Endothelial cell of umbilical vein (primary cell): ENCODE measurements at regions of chr17 and their contacts with region 1.

Region 1: GRCh38 chr17:48241131-48241591 is 133.6 kb downstream of the SNX11 start:
- DNase-seq: peak; percentile 73
- H3K4me3 ChIP-seq: no peak overlapping the region
- H3K27ac ChIP-seq: peak overlapping the region; percentile 90
- H3K4me1 ChIP-seq: peaks cover 92% of the 10 kb centered on the region
- H3K27me3 ChIP-seq: no peaks in the 10 kb centered on the region
- CTCF ChIP-seq: no peak
- POLR2A ChIP-seq: peak; percentile 14

Region 2: DNA sequence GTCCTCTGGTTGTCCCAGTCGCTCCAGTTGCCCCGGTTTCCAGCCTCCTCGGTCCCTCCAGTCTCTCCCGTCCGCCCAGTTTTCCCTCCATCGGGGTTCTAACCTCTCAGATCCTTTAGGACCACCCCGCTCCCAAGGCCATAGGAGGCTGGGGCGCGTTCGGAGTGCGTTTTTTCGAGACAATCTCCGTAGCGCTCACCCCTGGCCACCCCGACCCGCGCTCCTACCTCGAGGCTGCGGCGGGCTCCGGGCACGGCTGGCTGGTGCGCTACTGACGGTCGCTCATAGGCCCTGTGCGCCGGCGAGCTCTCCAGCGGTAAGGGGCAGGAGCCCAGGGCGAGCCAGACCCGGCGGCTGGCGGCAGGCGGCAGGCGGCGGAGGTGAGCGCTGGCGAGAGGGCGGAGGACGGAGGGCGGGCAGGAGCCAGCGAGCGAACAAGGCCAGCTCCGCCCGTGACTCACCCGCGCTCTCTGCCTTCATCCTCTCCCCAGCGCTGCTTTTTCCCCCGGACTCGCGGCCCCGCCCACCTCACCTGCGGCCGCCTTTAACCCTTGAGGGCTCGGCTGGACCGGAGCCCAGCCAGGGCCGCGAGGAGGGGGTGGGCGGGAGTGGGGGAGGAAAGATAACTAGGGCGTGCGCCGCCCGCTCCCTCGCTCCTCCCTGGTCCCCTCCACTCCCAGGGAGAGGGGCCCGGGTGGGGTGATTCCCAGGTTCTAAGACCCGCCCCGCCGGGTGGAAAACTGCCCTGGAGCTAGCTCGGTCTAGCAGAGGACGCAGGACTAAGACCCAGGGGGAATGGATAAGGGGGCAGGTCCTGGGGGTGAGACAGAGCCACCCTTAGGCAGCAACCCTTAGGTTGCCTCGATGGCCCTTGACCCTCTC is 390.2 kb before region 1 on chr17 and contains the start of gene SP6:
- CTCF ChIA-PET with region 1: no interaction called
- POLR2A ChIA-PET with region 1: no interaction called
- dilution Hi-C with region 1: no loop called
- intact Hi-C with region 1: no loop called
- DNase-seq: peak; percentile 58
- H3K4me3 ChIP-seq: peak within 1 kb of the TSS in 1 of 3 experiments; percentile 6
- H3K27ac ChIP-seq: no peak within 1 kb of the TSS
- H3K4me1 ChIP-seq: peaks cover 16% of the 10 kb centered on the region
- H3K27me3 ChIP-seq: peaks cover 3 to 11% of the 10 kb centered on the region in 2 experiments
- CTCF ChIP-seq: peak in 1 of 2 donors; percentile 31
- POLR2A ChIP-seq: no peak
- total RNA-seq, gene SP6: 0.90 and 1.3 TPM in 2 replicates

Region 3: DNA sequence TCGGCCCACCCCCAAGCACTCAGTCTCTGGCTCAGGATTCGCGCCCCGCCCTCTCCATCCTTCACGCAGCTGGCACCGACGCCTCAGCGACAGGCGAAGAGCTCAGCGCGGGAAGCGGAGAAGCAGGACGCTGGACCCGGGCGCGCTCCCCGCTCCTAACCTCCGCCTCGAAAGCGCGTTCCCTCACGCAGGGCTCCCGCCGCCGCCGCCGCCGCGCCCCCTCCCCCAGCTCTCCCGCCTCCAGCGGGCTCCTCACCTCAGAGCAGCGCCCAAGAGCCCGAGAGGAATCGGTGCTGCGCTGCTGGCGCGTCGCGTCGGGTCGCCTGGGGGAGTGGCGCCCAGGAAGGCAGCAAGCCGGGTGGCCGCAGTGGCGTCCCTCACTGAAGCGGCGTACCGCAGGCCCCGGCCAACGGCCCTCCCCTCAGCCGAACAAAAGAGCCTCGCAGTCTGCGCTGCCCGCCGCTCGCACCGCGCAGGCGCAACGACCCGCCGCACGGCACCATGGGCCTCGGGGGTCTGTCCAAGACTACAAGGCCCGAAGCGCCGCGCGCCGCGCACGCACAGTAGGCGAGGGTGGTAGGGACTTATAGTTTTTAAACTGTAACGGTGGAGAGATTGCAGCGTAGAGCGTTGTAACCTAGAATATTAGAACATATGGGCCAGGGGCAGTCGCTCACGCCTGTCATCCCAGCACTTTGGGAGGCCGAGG is 140.0 kb before region 1 on chr17 and contains the start of gene CBX1:
- CTCF ChIA-PET with region 1: no interaction called
- POLR2A ChIA-PET with region 1: no interaction called
- dilution Hi-C with region 1: no loop called
- intact Hi-C with region 1: loop called (anchors 5 kb)
- DNase-seq: peak; percentile 96
- H3K4me3 ChIP-seq: peak within 1 kb of the TSS; percentile 60 to 91 (median 82)
- H3K27ac ChIP-seq: peak within 1 kb of the TSS; percentile 58
- H3K4me1 ChIP-seq: peaks cover 8% of the 10 kb centered on the region
- H3K27me3 ChIP-seq: no peaks in the 10 kb centered on the region
- CTCF ChIP-seq: no peak
- POLR2A ChIP-seq: peak; percentile 50
- total RNA-seq, gene CBX1: 95.2 and 102 TPM in 2 replicates

Region 4: GRCh38 chr17:48228721-48229120 is 12.4 kb before region 1 on chr17:
- CTCF ChIA-PET with region 1: interaction called, 11 read pairs
- POLR2A ChIA-PET with region 1: interaction called, 4 read pairs
- dilution Hi-C with region 1: no loop called
- intact Hi-C with region 1: loop called (anchors 1 kb)
- DNase-seq: no peak
- H3K4me3 ChIP-seq: no peak overlapping the region
- H3K27ac ChIP-seq: no peak overlapping the region
- H3K4me1 ChIP-seq: peaks cover 9% of the 10 kb centered on the region
- H3K27me3 ChIP-seq: no peaks in the 10 kb centered on the region
- CTCF ChIP-seq: no peak
- POLR2A ChIP-seq: no peak

Region 5: GRCh38 chr17:48382989-48383388 is 141.8 kb after region 1 on chr17:
- CTCF ChIA-PET with region 1: no interaction called
- POLR2A ChIA-PET with region 1: no interaction called
- dilution Hi-C with region 1: no loop called
- intact Hi-C with region 1: no loop called
- DNase-seq: no peak
- H3K4me3 ChIP-seq: no peak overlapping the region
- H3K27ac ChIP-seq: no peak overlapping the region
- H3K4me1 ChIP-seq: no peaks in the 10 kb centered on the region
- H3K27me3 ChIP-seq: peaks cover 65 to 78% of the 10 kb centered on the region in 2 experiments
- CTCF ChIP-seq: no peak
- POLR2A ChIP-seq: no peak